HCT116 (cell line): ENCODE measurements at regions of chr1 and their contacts with region 1.

Region 1: DNA sequence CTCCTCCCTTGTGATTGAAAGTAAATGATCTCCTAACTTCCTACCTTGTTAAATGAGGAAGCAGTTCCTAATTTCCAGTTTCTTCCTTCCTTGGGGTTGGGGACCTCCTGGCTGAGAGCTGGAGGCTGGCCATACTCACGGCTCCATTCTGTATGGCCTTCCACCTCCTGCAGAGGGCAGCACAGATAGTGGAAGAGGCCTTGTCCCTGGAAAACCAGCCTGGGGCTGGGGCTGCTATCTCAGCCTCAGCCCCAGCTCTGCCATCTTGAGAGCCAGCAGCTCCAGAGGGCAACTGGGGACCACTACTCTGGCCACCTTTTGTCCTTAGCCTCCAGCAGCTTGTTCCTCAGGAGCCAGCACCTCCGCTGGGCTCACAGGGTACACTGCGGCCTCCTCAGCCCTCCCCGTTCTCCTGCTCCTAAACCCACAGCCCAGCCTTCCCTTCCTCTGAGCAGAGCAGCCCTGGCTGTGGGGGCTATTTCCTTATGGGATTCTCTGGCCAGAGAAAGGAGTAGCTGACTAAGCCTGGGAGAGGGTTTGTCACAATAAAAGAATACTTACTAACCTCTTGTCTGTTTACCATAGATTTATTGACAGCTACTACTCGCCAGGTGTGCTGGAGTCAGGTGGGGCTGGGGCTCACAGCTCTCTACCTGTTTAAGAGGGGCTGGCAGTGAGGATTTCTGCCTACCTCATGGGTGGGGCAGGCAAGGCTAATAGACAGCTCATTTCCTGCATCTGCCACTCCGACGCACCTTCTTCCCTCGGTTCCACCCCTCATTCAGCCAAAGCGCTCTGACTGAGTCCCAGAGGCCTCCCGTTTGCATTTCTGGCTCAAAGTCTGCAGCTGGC is 6.3 kb downstream of the TMEM234 start:
- DNase-seq: peak; percentile 32
- ATAC-seq: peak; percentile 94
- H3K4me3 ChIP-seq: no peak overlapping the region
- H3K27ac ChIP-seq: no peak overlapping the region
- H3K4me1 ChIP-seq: peaks cover 3 to 16% of the 10 kb centered on the region in 2 experiments; a peak in 3 of 4 replicates
- H3K27me3 ChIP-seq: no peaks in the 10 kb centered on the region
- CTCF ChIP-seq: peak; percentile 76 to 92 (median 90); a peak in 5 of 6 replicates
- POLR2A ChIP-seq: no peak
- RAD21 ChIP-seq: peak; percentile 86

Region 2: GRCh38 chr1:32291708-32292492 is 76.0 kb after region 1 on chr1 and contains the start of gene HDAC1:
- CTCF ChIA-PET with region 1: interaction called, 4 read pairs
- POLR2A ChIA-PET with region 1: no interaction called
- RAD21 ChIA-PET with region 1: no interaction called
- intact Hi-C with region 1: loop called (anchors 5 kb)
- DNase-seq: peak; percentile 91
- ATAC-seq: peak; percentile 95
- H3K4me3 ChIP-seq: peak within 1 kb of the TSS; percentile 98 to 100
- H3K27ac ChIP-seq: peak within 1 kb of the TSS; percentile 97
- H3K4me1 ChIP-seq: peaks cover 15 to 32% of the 10 kb centered on the region in 2 experiments
- H3K27me3 ChIP-seq: no peaks in the 10 kb centered on the region
- CTCF ChIP-seq: no peak
- POLR2A ChIP-seq: peak; percentile 62
- RAD21 ChIP-seq: no peak
- total RNA-seq, gene HDAC1: 232 TPM

Region 3: GRCh38 chr1:32316903-32317277 is 101.0 kb after region 1 on chr1:
- CTCF ChIA-PET with region 1: interaction called, 12 read pairs
- POLR2A ChIA-PET with region 1: no interaction called
- RAD21 ChIA-PET with region 1: no interaction called
- intact Hi-C with region 1: loop called (anchors 1 kb)
- DNase-seq: no peak
- ATAC-seq: no peak
- H3K4me3 ChIP-seq: no peak overlapping the region
- H3K27ac ChIP-seq: no peak overlapping the region
- H3K4me1 ChIP-seq: peaks cover 0 to 11% of the 10 kb centered on the region in 2 experiments; a peak in 3 of 4 replicates
- H3K27me3 ChIP-seq: no peaks in the 10 kb centered on the region
- CTCF ChIP-seq: no peak
- POLR2A ChIP-seq: no peak
- RAD21 ChIP-seq: no peak

Region 4: DNA sequence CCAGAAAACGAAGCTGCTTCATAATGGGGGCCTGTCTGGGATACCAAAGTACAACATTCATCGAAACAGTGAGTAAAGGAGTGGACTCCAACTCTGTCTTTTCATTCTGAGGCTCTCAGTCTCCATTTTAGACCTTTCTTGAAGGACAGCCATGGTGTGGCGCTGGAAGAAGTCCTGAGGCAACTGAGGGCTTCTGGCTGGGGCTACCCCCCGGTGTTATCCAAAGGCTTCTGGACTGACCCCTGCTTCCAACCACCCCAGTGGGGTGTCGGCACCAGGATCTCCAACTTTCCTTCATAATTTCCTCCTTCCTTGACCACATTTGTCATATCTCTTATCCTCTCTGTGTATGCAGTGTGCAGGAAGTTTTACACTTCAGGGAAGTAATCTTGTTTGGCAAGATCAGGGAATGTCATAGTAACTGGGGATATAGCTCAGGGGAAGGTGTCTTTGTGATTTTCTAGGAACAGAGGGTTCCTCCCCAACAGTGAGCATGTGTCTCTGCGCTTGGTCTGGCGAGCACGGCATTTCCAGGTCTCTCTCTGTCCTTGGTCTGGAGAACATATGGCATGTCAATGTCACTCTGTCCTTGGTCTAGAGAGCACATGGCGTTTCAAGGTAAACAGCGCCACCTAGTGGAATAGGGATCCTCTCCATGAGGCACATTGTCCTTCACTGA is 197.8 kb after region 1 on chr1:
- CTCF ChIA-PET with region 1: no interaction called
- POLR2A ChIA-PET with region 1: no interaction called
- RAD21 ChIA-PET with region 1: no interaction called
- intact Hi-C with region 1: loop called (anchors 2 kb)
- DNase-seq: peak; percentile 69
- ATAC-seq: peak; percentile 98
- H3K4me3 ChIP-seq: no peak overlapping the region
- H3K27ac ChIP-seq: no peak overlapping the region
- H3K4me1 ChIP-seq: peaks cover 0 to 6% of the 10 kb centered on the region in 2 experiments; a peak in 2 of 4 replicates
- H3K27me3 ChIP-seq: no peaks in the 10 kb centered on the region
- CTCF ChIP-seq: peak; percentile 68 to 87 (median 76); a peak in 5 of 6 replicates
- POLR2A ChIP-seq: no peak
- RAD21 ChIP-seq: peak; percentile 86